Mammary epithelial cell (primary cell): ENCODE measurements at regions of chr18 and their contacts with region 1.

Region 1: DNA sequence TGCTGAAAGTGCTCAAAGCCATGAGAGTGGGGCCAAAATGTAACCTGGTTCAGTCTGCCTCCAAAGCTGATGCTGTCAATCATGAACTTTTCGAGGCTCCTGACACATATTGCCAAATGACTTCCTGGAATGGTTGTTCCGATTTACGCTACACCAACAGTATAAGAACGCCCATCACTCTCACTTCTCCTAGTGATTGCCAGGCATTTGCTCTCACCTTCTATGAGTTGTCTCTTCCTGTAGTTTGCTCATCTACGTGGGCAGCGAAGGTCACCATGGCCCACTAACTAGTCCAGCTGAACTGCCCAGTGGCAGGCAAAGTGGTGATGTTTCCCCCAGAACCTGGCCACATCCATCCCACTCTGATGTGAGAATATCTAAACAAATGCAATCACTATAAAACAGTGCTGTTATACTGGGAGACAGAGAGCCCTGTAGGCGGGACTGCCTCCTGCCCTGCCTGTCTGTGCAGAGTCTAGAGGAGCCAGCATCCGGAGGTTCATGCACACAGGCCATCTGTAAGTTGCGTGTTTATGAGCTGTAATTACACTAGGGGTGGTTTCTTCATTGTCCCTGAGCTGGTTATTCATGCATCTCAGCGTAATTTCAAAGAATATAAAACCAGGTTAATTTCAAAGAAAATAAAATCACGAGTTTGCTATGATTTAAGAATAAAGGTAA is 8.8 kb upstream of the CABLES1 start:
- DNase-seq: no peak
- H3K4me3 ChIP-seq: no peak overlapping the region
- H3K27ac ChIP-seq: no peak overlapping the region
- H3K4me1 ChIP-seq: no peaks in the 10 kb centered on the region
- H3K27me3 ChIP-seq: no peaks in the 10 kb centered on the region
- CTCF ChIP-seq: no peak

Region 2: DNA sequence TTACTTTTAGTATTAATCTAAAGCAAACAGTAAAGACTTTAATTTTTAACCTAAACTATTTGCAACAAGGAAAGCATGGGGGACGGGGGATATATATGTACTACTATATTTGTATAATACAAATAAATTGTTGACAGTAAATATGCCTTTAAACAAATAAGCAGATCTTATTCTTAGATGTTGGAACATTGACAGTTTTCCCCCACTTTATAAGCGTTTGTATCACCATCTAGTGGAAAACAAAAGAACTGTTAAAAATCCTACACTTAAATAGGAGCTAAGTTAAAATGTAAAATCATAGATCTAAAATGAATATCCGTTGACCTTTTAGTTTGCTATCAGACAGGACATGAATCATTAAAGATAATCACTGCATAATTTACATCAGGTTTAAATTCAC is 143.3 kb before region 1 on chr18:
- CTCF ChIA-PET with region 1: no interaction called
- dilution Hi-C with region 1: no loop called
- in situ Hi-C with region 1: no loop called
- intact Hi-C with region 1: no loop called
- DNase-seq: no peak
- H3K4me3 ChIP-seq: no peak overlapping the region
- H3K27ac ChIP-seq: no peak overlapping the region
- H3K4me1 ChIP-seq: peaks cover 9% of the 10 kb centered on the region
- H3K27me3 ChIP-seq: no peaks in the 10 kb centered on the region
- CTCF ChIP-seq: peak; percentile 34 to 42

Region 3: DNA sequence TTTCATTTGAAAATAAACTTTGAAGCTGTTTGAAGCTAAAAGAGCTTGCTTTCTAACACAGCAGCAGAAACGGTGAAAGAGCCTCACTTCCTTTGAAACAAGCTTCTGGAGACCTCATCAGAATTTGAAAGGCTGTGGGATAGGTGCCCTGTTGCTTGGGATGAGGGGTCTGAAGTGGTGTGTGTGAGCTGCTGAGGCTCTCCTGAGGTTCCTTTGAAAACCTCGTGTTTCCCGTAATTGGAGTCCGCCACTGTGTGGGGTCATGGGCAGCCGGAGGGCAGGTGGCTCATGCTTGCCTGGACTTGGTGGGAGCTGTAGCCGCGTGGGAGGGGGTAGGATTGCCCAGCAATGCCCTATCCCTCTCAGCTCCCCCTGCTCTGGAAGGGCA is 43.1 kb after region 1 on chr18:
- CTCF ChIA-PET with region 1: no interaction called
- dilution Hi-C with region 1: loop called (anchors 5 kb)
- in situ Hi-C with region 1: no loop called
- intact Hi-C with region 1: no loop called
- DNase-seq: no peak
- H3K4me3 ChIP-seq: no peak overlapping the region
- H3K27ac ChIP-seq: no peak overlapping the region
- H3K4me1 ChIP-seq: peaks cover 7% of the 10 kb centered on the region
- H3K27me3 ChIP-seq: no peaks in the 10 kb centered on the region
- CTCF ChIP-seq: no peak